Testis (tissue), 5 donors: ENCODE measurements at regions of chr13 and their contacts with region 1.

Region 1: GRCh38 chr13:48769107-48769704 is 115.5 kb downstream of the CYSLTR2 start:
- DNase-seq: peak; percentile 97
- H3K4me3 ChIP-seq: no peak overlapping the region
- H3K27ac ChIP-seq: no peak overlapping the region
- H3K4me1 ChIP-seq: no peaks in the 10 kb centered on the region
- H3K27me3 ChIP-seq: no peaks in the 10 kb centered on the region
- CTCF ChIP-seq: peak; percentile 96 to 100 (median 100)
- POLR2A ChIP-seq: no peak

Region 2: GRCh38 chr13:48448959-48449614 is 320.1 kb before region 1 on chr13:
- intact Hi-C with region 1: no loop called
- DNase-seq: no peak
- H3K4me3 ChIP-seq: no peak overlapping the region
- H3K27ac ChIP-seq: no peak overlapping the region
- H3K4me1 ChIP-seq: no peaks in the 10 kb centered on the region
- H3K27me3 ChIP-seq: no peaks in the 10 kb centered on the region
- CTCF ChIP-seq: no peak
- POLR2A ChIP-seq: no peak

Region 3: GRCh38 chr13:48594096-48594815 is 174.9 kb before region 1 on chr13:
- intact Hi-C with region 1: loop called (anchors 5 kb)
- DNase-seq: no peak
- H3K4me3 ChIP-seq: no peak overlapping the region
- H3K27ac ChIP-seq: no peak overlapping the region
- H3K4me1 ChIP-seq: no peaks in the 10 kb centered on the region
- H3K27me3 ChIP-seq: no peaks in the 10 kb centered on the region
- CTCF ChIP-seq: no peak
- POLR2A ChIP-seq: no peak

Region 4: DNA sequence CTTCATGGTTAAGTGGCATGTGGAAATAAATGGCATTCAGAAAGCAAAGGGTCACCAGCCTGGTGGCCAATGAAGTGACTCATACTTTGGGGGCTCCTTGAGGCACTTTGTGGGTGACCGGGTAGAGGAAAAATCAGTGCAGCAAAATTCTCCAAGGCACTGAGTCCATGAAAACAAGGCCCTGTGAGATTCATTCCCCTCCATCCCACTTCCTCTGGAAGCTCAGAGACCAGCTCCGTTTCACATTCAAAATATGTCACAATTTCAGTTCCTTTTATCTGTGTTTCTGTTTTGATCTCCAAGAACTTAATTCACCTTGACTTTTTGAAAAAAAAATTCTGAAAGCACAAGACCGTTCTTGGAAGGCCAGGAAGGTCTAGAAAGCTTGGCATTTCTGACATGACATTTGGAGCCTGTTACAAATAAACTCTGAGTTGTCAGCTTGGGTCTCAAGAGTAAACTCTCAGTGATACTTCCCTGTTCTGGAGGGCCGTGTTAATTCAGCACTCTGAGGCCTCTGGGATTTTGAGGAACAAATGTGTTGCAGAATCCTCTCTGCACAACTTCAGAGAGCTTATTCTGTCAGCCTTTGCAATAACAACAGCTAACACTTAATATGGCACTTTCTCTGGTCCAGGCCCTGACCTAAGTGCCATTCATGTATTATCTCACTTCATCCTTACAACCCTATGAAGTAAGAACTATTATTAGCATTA is 108.7 kb before region 1 on chr13:
- intact Hi-C with region 1: no loop called
- DNase-seq: no peak
- H3K4me3 ChIP-seq: no peak overlapping the region
- H3K27ac ChIP-seq: peak overlapping the region in 1 of 2 donors; percentile 28
- H3K4me1 ChIP-seq: no peaks in the 10 kb centered on the region
- H3K27me3 ChIP-seq: no peaks in the 10 kb centered on the region
- CTCF ChIP-seq: no peak
- POLR2A ChIP-seq: no peak

Region 5: GRCh38 chr13:48727241-48728011 is 41.8 kb before region 1 on chr13:
- intact Hi-C with region 1: no loop called
- DNase-seq: no peak
- H3K4me3 ChIP-seq: no peak overlapping the region
- H3K27ac ChIP-seq: no peak overlapping the region
- H3K4me1 ChIP-seq: no peaks in the 10 kb centered on the region
- H3K27me3 ChIP-seq: no peaks in the 10 kb centered on the region
- CTCF ChIP-seq: no peak
- POLR2A ChIP-seq: no peak

Region 6: GRCh38 chr13:48808689-48809088 is 39.5 kb after region 1 on chr13:
- intact Hi-C with region 1: no loop called
- DNase-seq: no peak
- H3K4me3 ChIP-seq: no peak overlapping the region
- H3K27ac ChIP-seq: no peak overlapping the region
- H3K4me1 ChIP-seq: no peaks in the 10 kb centered on the region
- H3K27me3 ChIP-seq: no peaks in the 10 kb centered on the region
- CTCF ChIP-seq: no peak
- POLR2A ChIP-seq: no peak